Left ventricle myocardium superior (tissue), 1 donor: ENCODE measurements at regions of chr20 and their contacts with region 1.

Region 1: GRCh38 chr20:11204926-11205768 is 531.3 kb upstream of the JAG1 start:
- DNase-seq: peak; percentile 38
- ATAC-seq: peak; percentile 97

Region 2: DNA sequence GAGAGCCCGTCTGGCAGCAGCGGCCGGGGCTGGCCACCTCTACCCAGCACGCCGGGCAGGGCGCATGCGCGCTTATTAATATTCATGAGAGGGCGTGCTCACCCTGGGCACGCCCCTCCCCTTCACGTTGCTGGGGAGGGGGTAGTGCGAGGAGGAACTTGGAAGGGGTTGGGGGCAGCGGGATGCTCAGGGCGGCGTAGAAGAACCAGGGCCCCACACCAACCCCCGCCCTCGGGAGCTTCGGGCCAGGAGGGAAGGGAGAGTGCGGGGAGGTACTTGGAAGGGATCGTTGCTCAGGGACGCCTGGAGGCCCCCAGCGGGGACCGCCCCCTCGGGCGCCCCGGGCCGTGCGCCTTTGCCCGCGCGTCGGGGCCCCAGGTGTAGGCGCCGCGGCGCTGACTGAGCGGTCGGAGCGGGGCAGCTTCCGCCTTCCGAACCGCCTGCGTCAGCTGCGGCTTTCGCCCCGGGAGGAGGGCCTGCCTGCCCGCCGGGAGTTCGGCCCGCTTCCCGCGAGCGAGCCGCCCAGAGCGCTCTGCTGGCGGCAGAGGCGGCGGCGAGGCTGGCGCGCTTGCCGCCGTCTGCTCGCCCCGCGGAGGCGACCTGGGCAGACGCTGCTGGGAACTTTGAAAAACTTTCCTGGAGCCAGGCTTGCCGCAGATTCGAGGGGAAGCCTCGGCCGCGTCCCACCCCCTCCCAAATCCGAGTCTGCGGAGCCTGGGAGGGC is 531.0 kb before region 1 on chr20 and contains the start of gene JAG1:
- intact Hi-C with region 1: loop called (anchors 10 kb)
- DNase-seq: peak; percentile 98
- ATAC-seq: peak; percentile 86
- total RNA-seq, gene JAG1: 17.0 TPM

Region 3: GRCh38 chr20:11511821-11512220 is 306.7 kb after region 1 on chr20:
- intact Hi-C with region 1: no loop called
- DNase-seq: no peak
- ATAC-seq: no peak